H1 (cell line): ENCODE measurements at regions of chr16 and their contacts with region 1.

Region 1: DNA sequence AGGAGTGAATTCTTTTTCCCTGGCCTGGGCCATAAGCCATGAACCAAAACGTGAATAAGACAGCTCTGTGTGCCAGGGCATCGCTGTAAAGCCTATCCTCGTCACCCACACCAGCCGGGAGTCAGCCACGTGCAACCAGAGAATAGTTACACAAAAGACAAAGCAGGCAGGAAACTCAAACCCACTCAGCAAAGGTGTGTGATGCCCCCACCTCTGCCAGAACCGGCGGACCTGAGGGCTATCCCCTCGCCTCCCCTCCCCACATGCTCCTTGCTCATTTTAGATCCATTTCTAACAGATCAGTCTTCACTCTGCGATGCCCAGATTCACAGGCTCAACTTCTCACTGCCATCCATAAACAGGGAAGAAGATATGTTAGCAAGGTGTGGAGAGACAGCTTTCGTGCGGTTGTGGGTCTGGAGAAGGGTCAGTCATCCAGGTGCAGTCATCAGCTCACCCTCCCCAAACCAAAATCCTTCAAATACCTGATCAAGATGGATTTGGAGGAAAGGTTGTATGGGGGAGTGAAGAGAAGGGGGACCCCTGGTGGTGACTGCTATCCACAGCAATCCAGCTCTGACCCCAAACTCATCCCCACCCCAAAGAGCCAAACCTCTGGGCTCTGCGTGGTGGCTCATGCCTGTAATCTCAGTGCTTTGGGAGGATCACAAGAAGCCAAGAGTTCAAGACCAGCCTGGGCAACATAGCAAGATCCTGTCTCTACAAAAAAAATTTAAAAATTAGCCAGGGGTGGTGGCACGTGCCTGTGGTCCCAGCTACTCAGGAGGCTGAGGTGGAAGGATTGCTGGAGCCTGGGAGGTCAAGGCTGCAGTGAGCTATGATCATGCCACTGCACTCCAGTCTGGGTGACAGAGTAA is 219.2 kb downstream of the C16orf78 start:
- DNase-seq: peak; percentile 49 to 80
- H3K4me3 ChIP-seq: no peak overlapping the region
- H3K27ac ChIP-seq: no peak overlapping the region
- H3K4me1 ChIP-seq: peaks cover 13 to 40% (median 19%) of the 10 kb centered on the region in 4 experiments
- H3K27me3 ChIP-seq: no peaks in the 10 kb centered on the region
- CTCF ChIP-seq: peak; percentile 79 to 88 (median 81)
- EP300 ChIP-seq: no peak
- POLR2A ChIP-seq: no peak
- RAD21 ChIP-seq: peak; percentile 76 to 82

Region 2: GRCh38 chr16:49452578-49452977 is 140.2 kb before region 1 on chr16:
- CTCF ChIA-PET with region 1: interaction called, 10 read pairs
- POLR2A ChIA-PET with region 1: no interaction called
- DNase-seq: no peak
- H3K4me3 ChIP-seq: no peak overlapping the region
- H3K27ac ChIP-seq: no peak overlapping the region
- H3K4me1 ChIP-seq: peaks cover 0 to 9% (median 3%) of the 10 kb centered on the region in 4 experiments; a peak in 6 of 7 replicates
- H3K27me3 ChIP-seq: no peaks in the 10 kb centered on the region; a peak in 2 of 7 replicates
- CTCF ChIP-seq: no peak
- EP300 ChIP-seq: no peak
- POLR2A ChIP-seq: no peak
- RAD21 ChIP-seq: 0 out of 4 replicates have a peak, but pooled peaks of 1 of the 2 experiments have one; percentile 2

Region 3: GRCh38 chr16:49491771-49492761 is 100.7 kb before region 1 on chr16:
- CTCF ChIA-PET with region 1: interaction called, 10 read pairs
- POLR2A ChIA-PET with region 1: no interaction called
- DNase-seq: peak; percentile 41 to 92
- H3K4me3 ChIP-seq: peak overlapping the region in 2 of 4 experiments; percentile 29 to 37; a peak in 2 of 8 replicates
- H3K27ac ChIP-seq: 0 out of 2 replicates have a peak overlapping the region, but pooled peaks have one; percentile 52
- H3K4me1 ChIP-seq: peaks cover 0 to 16% (median 5%) of the 10 kb centered on the region in 4 experiments; a peak in 6 of 7 replicates
- H3K27me3 ChIP-seq: no peaks in the 10 kb centered on the region
- CTCF ChIP-seq: peak; percentile 65 to 95 (median 91)
- EP300 ChIP-seq: peak in 1 of 2 experiments; percentile 23; a peak in 1 of 3 replicates
- POLR2A ChIP-seq: no peak
- RAD21 ChIP-seq: peak; percentile 58 to 77

Region 4: DNA sequence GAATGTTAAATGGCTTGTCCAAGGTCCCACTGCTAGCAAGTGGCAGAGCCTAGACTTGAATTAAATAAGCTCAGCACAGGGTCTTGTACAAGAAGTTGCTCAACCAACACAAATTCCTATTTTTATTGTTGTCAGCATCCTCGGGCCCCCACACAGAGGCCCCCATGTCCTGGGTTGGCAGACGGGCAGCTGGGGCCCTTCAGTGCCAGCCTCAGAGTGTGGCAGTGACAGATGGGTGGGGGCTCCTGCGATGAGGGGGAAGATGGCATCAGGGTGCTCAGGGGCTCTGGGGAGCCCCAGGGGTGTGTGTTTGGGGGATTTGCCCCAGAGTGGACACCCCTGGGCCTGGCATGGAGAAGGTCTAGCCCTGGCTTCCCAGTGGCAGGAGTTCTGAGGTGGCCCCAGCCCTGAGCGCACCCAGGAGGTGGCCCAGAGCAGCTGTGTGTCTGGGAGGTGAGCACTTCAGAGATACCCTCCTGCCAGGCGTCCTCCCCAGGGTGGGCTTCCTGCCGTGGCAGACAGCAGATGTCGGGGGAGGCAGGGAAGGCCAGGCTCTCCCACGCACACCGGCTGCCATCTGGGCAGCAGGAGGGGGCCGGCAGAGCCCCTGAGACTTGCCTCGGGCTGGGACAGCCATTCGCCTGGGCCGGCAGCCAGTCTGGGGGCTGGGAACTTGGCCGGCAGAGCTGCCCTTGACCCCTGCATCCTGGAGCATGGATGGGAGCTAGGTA is 68.4 kb before region 1 on chr16:
- CTCF ChIA-PET with region 1: interaction called, 10 read pairs
- POLR2A ChIA-PET with region 1: no interaction called
- DNase-seq: no peak
- H3K4me3 ChIP-seq: no peak overlapping the region
- H3K27ac ChIP-seq: no peak overlapping the region
- H3K4me1 ChIP-seq: peaks cover 0 to 21% (median 10%) of the 10 kb centered on the region in 4 experiments; a peak in 5 of 7 replicates
- H3K27me3 ChIP-seq: no peaks in the 10 kb centered on the region
- CTCF ChIP-seq: no peak
- EP300 ChIP-seq: no peak
- POLR2A ChIP-seq: no peak
- RAD21 ChIP-seq: no peak

Region 5: DNA sequence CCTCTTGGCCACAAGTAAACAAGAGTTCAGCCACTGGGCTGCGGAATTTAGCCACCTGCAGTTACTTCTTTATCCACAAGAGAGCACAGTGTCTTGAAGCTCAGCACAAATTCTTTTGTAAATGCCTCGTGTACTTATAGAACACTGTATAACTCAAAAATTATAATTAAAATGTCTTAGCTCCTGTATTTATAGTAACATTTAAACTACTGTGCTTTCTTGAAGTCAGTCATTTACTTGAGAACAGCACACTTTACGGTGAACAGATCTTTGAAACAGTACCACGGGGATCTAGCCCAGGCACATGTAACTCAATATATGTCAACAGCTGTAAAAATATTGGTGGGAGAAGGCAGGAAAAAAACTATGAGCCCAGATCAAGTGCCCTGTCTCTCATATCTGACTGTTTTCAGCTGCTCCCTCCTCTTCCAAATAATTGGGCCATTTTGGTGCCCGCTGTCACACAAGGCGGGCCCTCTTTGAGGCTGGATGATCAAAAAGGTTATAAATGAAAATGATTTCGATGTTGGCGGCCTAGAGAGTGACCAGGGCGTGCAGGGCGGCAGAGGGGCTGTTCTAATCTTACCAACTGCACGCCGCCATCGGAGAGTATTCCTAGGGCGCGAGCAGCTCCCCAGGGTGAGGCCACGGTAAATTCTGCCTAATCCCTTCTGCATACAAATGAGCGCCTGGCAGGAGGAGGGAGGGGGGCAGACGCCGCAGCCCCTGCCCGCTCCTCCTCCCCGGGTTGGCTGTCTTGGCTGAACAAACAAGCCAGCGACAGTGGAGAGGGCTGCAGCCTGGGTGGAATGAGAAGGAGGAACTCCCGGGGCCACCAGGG is 36.0 kb before region 1 on chr16:
- CTCF ChIA-PET with region 1: interaction called, 165 read pairs
- POLR2A ChIA-PET with region 1: interaction called, 4 read pairs
- DNase-seq: peak; percentile 43 to 75
- H3K4me3 ChIP-seq: peak overlapping the region in 3 of 4 experiments; percentile 24 to 50 (median 38); a peak in 6 of 8 replicates
- H3K27ac ChIP-seq: 0 out of 2 replicates have a peak overlapping the region, but pooled peaks have one; percentile 39
- H3K4me1 ChIP-seq: peaks cover 9 to 25% (median 19%) of the 10 kb centered on the region in 4 experiments
- H3K27me3 ChIP-seq: no peaks in the 10 kb centered on the region; a peak in 2 of 7 replicates
- CTCF ChIP-seq: peak; percentile 15 to 79 (median 65)
- EP300 ChIP-seq: peak in 1 of 2 experiments; percentile 58; a peak in 1 of 3 replicates
- POLR2A ChIP-seq: no peak; a peak in 1 of 3 replicates
- RAD21 ChIP-seq: peak; percentile 51 to 68

Region 6: DNA sequence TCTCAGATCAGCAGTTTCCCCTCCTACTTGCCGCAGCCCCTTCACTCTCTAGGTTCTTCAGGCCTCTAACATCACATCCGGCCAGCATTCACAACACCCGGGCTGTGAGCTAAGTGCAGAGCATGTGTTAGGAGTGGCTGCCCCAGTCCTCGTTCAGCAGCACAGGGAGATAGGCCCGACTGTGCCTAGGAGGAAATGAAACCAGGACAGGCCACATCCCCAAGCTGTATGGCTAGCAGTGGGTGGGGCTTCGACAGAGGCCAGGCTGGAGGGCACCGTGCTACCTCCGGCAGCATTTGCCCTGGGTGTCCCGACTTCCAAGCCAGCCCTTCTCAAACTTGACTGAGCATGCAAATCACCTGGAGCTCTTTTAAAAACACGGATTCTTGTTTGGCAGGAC is 17.4 kb before region 1 on chr16:
- CTCF ChIA-PET with region 1: interaction called, 30 read pairs
- POLR2A ChIA-PET with region 1: interaction called, 4 read pairs
- DNase-seq: peak in 1 of 2 experiments; percentile 50
- H3K4me3 ChIP-seq: no peak overlapping the region
- H3K27ac ChIP-seq: no peak overlapping the region
- H3K4me1 ChIP-seq: peaks cover 4 to 17% (median 6%) of the 10 kb centered on the region in 4 experiments; a peak in 5 of 7 replicates
- H3K27me3 ChIP-seq: no peaks in the 10 kb centered on the region
- CTCF ChIP-seq: no peak
- EP300 ChIP-seq: no peak
- POLR2A ChIP-seq: no peak
- RAD21 ChIP-seq: no peak